Activated CD4-positive, alpha-beta T cell treated with anti-CD3 and anti-CD28 coated beads, Interleukin-2, amount 10 ng/mL, durations not matched to agents 7 days and 5 days (primary cell): ENCODE measurements at regions of chr2 and their contacts with region 1.

Region 1: DNA sequence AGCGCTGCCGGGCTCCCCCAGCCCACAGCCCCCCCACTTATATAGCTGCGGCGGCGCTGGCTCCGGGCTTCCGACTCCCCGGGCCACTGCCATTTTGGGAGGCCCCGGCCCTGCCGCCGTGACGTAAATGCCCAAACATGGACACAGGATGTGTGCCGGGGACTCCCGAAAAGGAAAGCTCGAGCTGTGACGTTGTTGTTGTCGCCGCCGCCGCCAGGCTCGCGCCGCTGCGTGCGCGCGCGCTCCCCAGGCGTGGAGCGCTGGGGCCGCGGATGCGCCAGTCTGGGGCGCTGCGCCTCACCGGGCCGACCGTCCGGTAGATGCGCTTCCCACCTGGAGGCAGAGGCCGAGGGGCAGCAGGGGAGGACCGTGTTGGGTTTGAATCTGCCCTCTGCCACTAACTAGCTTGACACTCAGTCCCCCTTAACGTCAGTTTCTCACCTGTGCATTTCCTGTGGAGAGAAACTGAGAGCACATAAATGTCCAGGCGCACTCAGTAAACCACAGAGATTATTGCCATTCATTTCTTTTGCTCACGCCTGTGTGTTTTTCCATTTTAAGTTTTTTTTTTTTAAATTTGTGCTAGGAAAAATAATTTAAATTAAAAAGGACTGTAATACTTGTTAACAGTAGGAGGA is at the start of gene EGR4:
- DNase-seq: peak; percentile 95
- H3K4me3 Mint-ChIP-seq: peak within 1 kb of the TSS; percentile 70
- H3K27ac Mint-ChIP-seq: no peak within 1 kb of the TSS
- H3K4me1 Mint-ChIP-seq: peaks cover 16% of the 10 kb centered on the region
- H3K27me3 Mint-ChIP-seq: peaks cover 86% of the 10 kb centered on the region
- total RNA-seq, gene EGR4: not detected

Region 2: GRCh38 chr2:73279852-73280251 is 13.8 kb before region 1 on chr2:
- CTCF ChIA-PET with region 1: interaction called, 12 read pairs
- POLR2A ChIA-PET with region 1: no interaction called
- DNase-seq: no peak
- H3K4me3 Mint-ChIP-seq: no peak overlapping the region
- H3K27ac Mint-ChIP-seq: no peak overlapping the region
- H3K4me1 Mint-ChIP-seq: peaks cover 11% of the 10 kb centered on the region
- H3K27me3 Mint-ChIP-seq: no peaks in the 10 kb centered on the region

Region 3: GRCh38 chr2:73307720-73308119 is 14.1 kb after region 1 on chr2:
- CTCF ChIA-PET with region 1: interaction called, 10 read pairs
- POLR2A ChIA-PET with region 1: no interaction called
- DNase-seq: no peak
- H3K4me3 Mint-ChIP-seq: no peak overlapping the region
- H3K27ac Mint-ChIP-seq: no peak overlapping the region
- H3K4me1 Mint-ChIP-seq: no peaks in the 10 kb centered on the region
- H3K27me3 Mint-ChIP-seq: peaks cover 36% of the 10 kb centered on the region

Region 4: GRCh38 chr2:73588177-73588576 is 294.5 kb after region 1 on chr2:
- CTCF ChIA-PET with region 1: no interaction called
- POLR2A ChIA-PET with region 1: no interaction called
- DNase-seq: no peak
- H3K4me3 Mint-ChIP-seq: no peak overlapping the region
- H3K27ac Mint-ChIP-seq: no peak overlapping the region
- H3K4me1 Mint-ChIP-seq: peaks cover 4% of the 10 kb centered on the region
- H3K27me3 Mint-ChIP-seq: no peaks in the 10 kb centered on the region